Colonic mucosa (tissue), 4 donors: ENCODE measurements at regions of chr20 and their contacts with region 1.

Region 1: GRCh38 chr20:8305449-8305978 is 173.4 kb downstream of the PLCB1 start:
- DNase-seq: peak; percentile 71
- H3K4me3 ChIP-seq: no peak overlapping the region
- H3K27ac ChIP-seq: no peak overlapping the region
- H3K4me1 ChIP-seq: no peaks in the 10 kb centered on the region
- H3K27me3 ChIP-seq: no peaks in the 10 kb centered on the region
- CTCF ChIP-seq: peak; percentile 58

Region 2: DNA sequence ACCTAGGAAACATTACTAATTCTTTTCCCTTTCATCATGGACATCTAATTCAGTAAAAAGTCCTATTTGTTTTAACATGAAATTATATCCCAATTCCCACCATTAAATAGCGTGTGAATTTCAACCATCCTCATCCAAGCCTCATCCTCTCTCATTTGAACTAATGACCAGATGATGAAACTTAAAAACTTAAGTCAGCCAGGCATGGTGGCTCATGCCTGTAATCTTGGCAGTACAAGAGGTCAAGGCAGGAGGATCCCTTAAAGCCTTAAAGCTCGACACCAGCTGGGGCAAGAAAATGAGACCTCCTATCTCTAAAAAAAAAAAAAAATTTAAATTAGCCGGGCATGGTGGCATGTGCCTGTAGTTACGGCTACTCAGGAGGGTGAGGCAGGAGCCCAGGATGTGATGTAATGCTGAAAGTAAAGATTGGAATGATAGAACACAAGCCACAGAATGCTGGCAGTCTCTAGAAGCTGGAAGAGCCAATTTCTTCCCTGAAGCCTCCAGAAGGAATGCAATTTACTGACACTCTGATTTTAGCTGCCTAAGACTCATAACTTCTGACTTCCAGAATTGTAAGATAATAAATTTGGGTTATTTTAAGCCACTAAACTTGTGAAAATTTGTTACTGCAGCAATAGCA is 338.2 kb before region 1 on chr20:
- intact Hi-C with region 1: no loop called
- DNase-seq: no peak
- H3K4me3 ChIP-seq: no peak overlapping the region
- H3K27ac ChIP-seq: no peak overlapping the region
- H3K4me1 ChIP-seq: no peaks in the 10 kb centered on the region
- H3K27me3 ChIP-seq: no peaks in the 10 kb centered on the region
- CTCF ChIP-seq: no peak

Region 3: DNA sequence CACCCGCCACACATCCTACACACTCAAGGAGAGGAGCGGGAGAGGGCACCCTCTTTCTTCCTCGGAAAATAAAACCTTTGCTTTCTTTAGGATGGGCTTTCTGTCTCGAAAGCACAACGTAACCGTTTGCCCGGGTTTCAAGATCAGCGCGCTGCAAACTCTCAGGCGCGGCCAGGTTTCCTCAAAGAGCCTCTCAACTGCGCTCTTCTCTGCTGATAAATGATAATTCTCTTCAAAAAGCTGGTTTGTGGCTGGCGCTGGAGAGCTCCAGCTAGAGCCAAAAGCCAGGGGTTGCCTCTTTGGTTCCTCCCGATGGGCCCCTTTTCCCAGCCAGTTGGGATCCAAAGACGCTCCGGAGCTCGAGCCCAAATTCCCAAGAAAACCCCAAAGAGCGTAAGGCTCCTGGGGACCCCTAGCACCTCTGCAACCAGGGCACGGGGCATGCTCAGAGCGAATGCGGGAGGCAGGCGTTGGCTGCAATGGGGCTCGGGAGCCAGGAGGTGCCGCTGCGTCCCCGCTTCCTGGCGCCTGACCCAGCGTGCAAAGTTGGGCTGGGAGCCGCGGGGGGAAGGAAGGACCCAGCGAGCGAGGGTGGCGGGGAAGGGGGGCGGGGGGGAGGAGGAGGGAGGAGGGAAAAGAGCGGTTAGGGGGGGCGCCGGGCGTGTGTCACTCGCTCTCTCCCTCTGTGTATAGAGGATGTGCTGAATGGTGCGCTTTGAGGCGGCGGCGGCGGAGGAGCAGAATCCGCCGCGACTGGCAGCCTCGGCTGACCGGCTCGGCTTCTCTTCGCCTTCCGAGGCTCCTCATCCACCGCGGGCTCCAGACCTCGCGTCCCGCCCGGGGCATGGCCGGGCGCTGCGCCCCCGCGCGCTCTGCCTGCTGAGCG is 173.7 kb before region 1 on chr20 and contains the start of gene PLCB1:
- intact Hi-C with region 1: loop called (anchors 10 kb)
- DNase-seq: peak; percentile 71
- H3K4me3 ChIP-seq: peak within 1 kb of the TSS; percentile 48
- H3K27ac ChIP-seq: peak within 1 kb of the TSS; percentile 47
- H3K4me1 ChIP-seq: no peaks in the 10 kb centered on the region
- H3K27me3 ChIP-seq: no peaks in the 10 kb centered on the region
- CTCF ChIP-seq: peak; percentile 61
- total RNA-seq, gene PLCB1: 8.3 to 9.6 TPM

Region 4: DNA sequence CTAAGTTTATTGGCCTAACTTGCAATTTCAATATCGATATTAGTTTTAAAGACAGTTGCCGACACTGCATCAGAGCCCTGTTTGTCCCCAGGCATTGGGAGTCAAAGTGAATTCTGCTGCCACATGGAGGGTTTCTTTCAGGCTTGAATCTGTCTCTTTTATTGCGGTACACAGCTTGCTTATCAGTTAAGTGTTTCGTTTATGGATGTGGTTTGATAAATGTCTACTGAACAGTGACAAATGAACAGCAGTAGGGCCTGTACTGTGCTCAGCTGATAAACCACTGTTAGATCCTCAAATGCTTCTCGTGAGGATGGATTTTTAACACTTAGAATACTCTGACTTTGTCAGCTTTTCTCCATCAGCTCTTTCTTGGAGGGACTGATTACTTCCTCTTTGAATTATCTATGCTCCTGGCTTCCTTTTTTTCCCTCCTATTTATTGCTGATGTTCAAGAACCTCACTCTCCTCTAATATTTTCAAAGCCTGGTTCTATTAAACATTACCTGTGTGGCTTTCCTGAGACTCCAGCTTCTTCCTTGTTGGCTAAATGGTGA is 67.4 kb after region 1 on chr20:
- intact Hi-C with region 1: no loop called
- DNase-seq: no peak
- H3K4me3 ChIP-seq: no peak overlapping the region
- H3K27ac ChIP-seq: no peak overlapping the region
- H3K4me1 ChIP-seq: no peaks in the 10 kb centered on the region
- H3K27me3 ChIP-seq: no peaks in the 10 kb centered on the region
- CTCF ChIP-seq: no peak